ENCODE measurements at regions of chr4 and their contacts with region 1.

Region 1: DNA sequence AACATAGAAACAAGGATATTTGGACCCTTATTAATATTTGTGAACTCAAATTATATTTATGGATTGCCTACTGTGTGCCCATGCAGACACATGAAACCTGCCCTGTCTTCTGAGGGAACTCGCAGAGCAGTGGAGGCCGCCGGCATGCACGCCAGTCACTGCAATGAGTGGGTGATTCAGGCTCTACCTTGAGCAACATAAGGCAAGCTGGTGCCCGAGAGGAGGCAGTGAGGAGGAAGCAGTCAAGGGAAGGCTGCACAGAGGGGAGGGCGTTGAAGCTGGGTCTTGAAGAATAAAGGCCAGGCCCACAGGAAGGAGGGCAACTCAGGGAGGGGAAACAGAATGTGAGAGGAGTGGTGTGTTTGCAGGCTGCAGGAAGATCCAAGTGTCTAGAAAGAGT is 52.8 kb downstream of the PPEF2 start:
- DNase-seq: peak; percentile 68
- H3K4me3 ChIP-seq: no peak overlapping the region
- H3K27ac ChIP-seq: no peak overlapping the region
- H3K4me1 ChIP-seq: peaks cover 11% of the 10 kb centered on the region
- H3K27me3 ChIP-seq: no peaks in the 10 kb centered on the region
- CTCF ChIP-seq: peak in 1 of 2 donors; percentile 10
- POLR2A ChIP-seq: no peak

Region 2: GRCh38 chr4:74932816-74933561 is 916.5 kb before region 1 on chr4 and contains the start of gene PARM1:
- CTCF ChIA-PET with region 1: no interaction called
- POLR2A ChIA-PET with region 1: no interaction called
- dilution Hi-C with region 1: no loop called
- intact Hi-C with region 1: loop called (anchors 5 kb)
- DNase-seq: peak; percentile 79
- H3K4me3 ChIP-seq: peak within 1 kb of the TSS; percentile 15 to 38 (median 33)
- H3K27ac ChIP-seq: no peak within 1 kb of the TSS
- H3K4me1 ChIP-seq: peaks cover 17% of the 10 kb centered on the region
- H3K27me3 ChIP-seq: peaks cover 35 to 44% of the 10 kb centered on the region in 2 experiments
- CTCF ChIP-seq: peak; percentile 59 to 81
- POLR2A ChIP-seq: no peak
- total RNA-seq, gene PARM1: not detected in 2 replicates

Region 3: DNA sequence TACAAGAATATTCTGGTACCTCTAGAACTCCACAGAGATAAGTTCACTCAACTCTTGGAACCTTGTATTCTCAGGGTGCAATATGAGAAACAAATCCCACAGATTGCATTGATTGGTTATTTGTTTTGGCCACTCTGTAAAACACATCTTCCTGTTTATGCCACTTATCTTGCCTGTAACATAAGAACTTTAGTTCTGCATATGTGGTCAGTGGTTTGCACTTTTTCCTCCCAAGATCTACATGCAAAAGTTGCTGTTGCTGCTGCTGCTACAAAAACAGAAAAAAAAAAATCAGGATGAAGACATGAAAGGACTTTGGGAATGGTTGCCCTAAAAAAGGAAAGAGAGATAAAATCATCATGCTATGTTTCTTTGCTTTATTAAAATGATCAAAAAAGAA is 284.0 kb before region 1 on chr4:
- CTCF ChIA-PET with region 1: interaction called, 20 read pairs
- POLR2A ChIA-PET with region 1: no interaction called
- dilution Hi-C with region 1: no loop called
- intact Hi-C with region 1: no loop called
- DNase-seq: no peak
- H3K4me3 ChIP-seq: no peak overlapping the region
- H3K27ac ChIP-seq: no peak overlapping the region
- H3K4me1 ChIP-seq: no peaks in the 10 kb centered on the region
- H3K27me3 ChIP-seq: peaks cover 2 to 6% of the 10 kb centered on the region in 2 experiments
- CTCF ChIP-seq: no peak
- POLR2A ChIP-seq: no peak

Region 4: GRCh38 chr4:75673027-75673958 is 176.2 kb before region 1 on chr4 and contains the start of gene G3BP2:
- CTCF ChIA-PET with region 1: no interaction called
- POLR2A ChIA-PET with region 1: no interaction called
- dilution Hi-C with region 1: no loop called
- intact Hi-C with region 1: loop called (anchors 5 kb)
- DNase-seq: peak; percentile 99
- H3K4me3 ChIP-seq: peak within 1 kb of the TSS; percentile 74 to 94 (median 84)
- H3K27ac ChIP-seq: peak within 1 kb of the TSS; percentile 83
- H3K4me1 ChIP-seq: peaks cover 25% of the 10 kb centered on the region
- H3K27me3 ChIP-seq: no peaks in the 10 kb centered on the region
- CTCF ChIP-seq: no peak
- POLR2A ChIP-seq: peak; percentile 67
- total RNA-seq, gene G3BP2: 180 and 194 TPM in 2 replicates

Region 5: GRCh38 chr4:75745161-75745560 is 104.3 kb before region 1 on chr4:
- CTCF ChIA-PET with region 1: interaction called, 13 read pairs
- POLR2A ChIA-PET with region 1: no interaction called
- dilution Hi-C with region 1: no loop called
- intact Hi-C with region 1: no loop called
- DNase-seq: peak; percentile 74
- H3K4me3 ChIP-seq: no peak overlapping the region
- H3K27ac ChIP-seq: peak overlapping the region; percentile 75
- H3K4me1 ChIP-seq: peaks cover 25% of the 10 kb centered on the region
- H3K27me3 ChIP-seq: no peaks in the 10 kb centered on the region
- CTCF ChIP-seq: no peak
- POLR2A ChIP-seq: no peak

Region 6: DNA sequence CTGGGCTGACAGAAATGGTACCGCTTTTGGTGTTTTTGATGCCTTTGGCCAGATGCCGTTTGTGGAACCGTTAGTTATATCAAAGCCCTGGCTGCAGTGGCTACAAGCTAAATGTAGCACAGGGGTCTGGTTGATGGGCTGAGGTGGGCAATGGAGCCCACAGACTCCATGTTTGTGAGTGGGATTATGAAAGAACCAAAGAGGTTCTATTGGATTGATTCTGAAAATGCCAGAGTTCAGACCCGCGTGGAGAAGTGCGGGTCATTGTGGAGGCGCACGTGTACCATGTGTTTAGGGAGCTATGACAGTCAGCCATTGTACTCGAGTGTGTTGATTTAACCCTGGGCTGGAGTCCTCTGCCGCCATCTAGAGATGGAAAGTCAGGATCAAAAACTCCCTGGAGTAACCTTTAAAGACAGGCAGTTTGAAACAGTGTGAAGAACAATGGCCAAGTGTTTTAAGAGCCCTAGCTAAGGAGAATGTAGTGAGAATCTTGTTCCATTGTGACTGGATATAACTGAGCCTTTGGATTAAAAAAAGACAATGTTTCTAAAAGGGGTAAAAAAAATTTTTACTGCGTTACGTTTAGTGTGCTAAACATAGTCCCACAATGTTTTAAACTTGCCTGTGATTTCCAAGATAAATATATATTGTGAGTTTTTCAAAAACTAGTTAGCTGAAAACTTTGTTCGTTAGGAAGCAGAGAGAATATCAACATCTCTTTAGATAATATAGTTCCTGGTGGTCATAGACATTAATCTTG is 237.7 kb after region 1 on chr4:
- CTCF ChIA-PET with region 1: no interaction called
- POLR2A ChIA-PET with region 1: no interaction called
- dilution Hi-C with region 1: no loop called
- intact Hi-C with region 1: no loop called
- DNase-seq: peak; percentile 78
- H3K4me3 ChIP-seq: no peak overlapping the region
- H3K27ac ChIP-seq: no peak overlapping the region
- H3K4me1 ChIP-seq: peaks cover 7% of the 10 kb centered on the region
- H3K27me3 ChIP-seq: peaks cover 4 to 15% of the 10 kb centered on the region in 2 experiments
- CTCF ChIP-seq: peak; percentile 55 to 64
- POLR2A ChIP-seq: no peak

Measured in endothelial cell of umbilical vein (primary cell).